IMR-90 (cell line): ENCODE measurements at regions of chr15 and their contacts with region 1.

Region 1: DNA sequence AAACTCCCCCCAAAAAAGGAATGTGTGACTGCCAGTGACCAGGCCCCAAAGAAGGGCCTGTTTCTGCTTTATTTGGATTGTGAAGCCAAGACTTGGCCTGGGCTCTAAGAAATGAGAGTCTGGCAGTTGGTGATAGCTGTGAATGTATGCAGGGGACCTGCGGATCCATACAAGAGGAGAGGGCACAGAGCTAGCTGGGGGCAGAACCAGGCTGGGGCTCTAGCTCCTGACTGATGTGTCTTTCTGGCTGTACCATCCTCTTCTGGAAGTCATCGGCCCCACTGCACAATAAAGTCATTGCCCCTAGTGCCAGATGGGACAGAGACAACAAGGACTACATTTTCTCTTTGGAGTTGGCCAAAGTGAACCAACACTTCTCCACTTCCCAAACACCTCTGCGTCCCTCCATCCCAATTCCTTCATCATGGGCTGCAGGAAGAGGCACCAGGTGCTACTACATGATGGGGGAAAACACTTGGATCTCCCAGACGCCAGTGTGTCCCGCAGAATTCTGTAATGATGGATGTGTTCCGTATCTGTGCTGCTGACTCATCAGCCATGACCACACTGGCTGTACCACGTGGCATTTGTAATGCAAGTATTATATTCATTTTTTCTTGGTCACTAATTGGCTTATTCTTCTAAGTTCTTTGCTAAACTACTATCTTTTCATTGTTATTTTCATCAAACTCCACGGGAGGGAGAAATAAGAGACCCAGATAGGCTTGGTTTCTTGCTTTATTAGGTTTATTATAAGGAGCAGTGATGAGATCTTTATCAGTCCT is 1.7 kb upstream of the PLA2G4F start:
- DNase-seq: peak; percentile 80
- ATAC-seq: peak; percentile 67
- H3K4me3 ChIP-seq: no peak overlapping the region
- H3K27ac ChIP-seq: no peak overlapping the region
- H3K4me1 ChIP-seq: peaks cover 4% of the 10 kb centered on the region; the same call in 1 of the 2 replicates
- H3K27me3 ChIP-seq: no peaks in the 10 kb centered on the region; the same call in 1 of the 2 replicates
- CTCF ChIP-seq: no peak
- POLR2A ChIP-seq: no peak
- RAD21 ChIP-seq: no peak

Region 2: DNA sequence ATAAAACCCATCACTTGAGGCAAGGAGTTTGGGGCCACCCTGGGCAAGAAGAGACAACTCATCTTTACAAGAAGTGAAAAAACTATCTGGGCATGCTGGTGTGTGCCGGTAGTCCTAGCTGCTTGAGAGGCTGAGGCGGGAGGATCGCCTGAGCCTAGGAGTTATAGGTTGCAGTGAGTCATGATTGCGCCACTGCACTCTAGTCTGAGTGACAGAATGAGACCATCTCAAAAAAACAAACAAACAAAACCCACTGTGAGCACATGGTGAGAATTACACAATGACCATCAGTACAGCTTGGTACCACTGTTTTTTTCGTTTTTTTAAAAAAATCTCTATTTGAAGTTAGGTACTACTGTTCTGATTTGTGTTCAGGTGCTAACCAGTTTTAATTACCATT is 36.3 kb after region 1 on chr15:
- CTCF ChIA-PET with region 1: no interaction called
- POLR2A ChIA-PET with region 1: interaction called, 12 read pairs
- dilution Hi-C with region 1: no loop called
- in situ Hi-C with region 1: no loop called
- intact Hi-C with region 1: no loop called
- DNase-seq: peak; percentile 62
- ATAC-seq: peak; percentile 59
- H3K4me3 ChIP-seq: no peak overlapping the region
- H3K27ac ChIP-seq: no peak overlapping the region
- H3K4me1 ChIP-seq: no peaks in the 10 kb centered on the region; the same call in 1 of the 2 replicates
- H3K27me3 ChIP-seq: no peaks in the 10 kb centered on the region
- CTCF ChIP-seq: no peak
- POLR2A ChIP-seq: no peak
- RAD21 ChIP-seq: no peak